Activated T-helper 1 cell treated with anti-CD3 and anti-CD28 coated beads, Interleukin-12 subunit alpha, Interleukin-12 subunit beta, Interleukin-2, Interleukin-4 antibody, amounts not matched to agents 30 ng/mL and 10 ng/mL and 1 ng/mL, durations not matched to agents 14 hours and 24 hours and 36 hours (primary cell): ENCODE measurements at regions of chr1 and their contacts with region 1.

Region 1: GRCh38 chr1:89041119-89041641 is 18.5 kb upstream of the GBP3 start:
- DNase-seq: no peak
- H3K4me3 Mint-ChIP-seq: peak overlapping the region; percentile 19
- H3K27ac Mint-ChIP-seq: peak overlapping the region; percentile 69
- H3K4me1 Mint-ChIP-seq: peaks cover 35% of the 10 kb centered on the region
- H3K27me3 Mint-ChIP-seq: peaks cover 1% of the 10 kb centered on the region

Region 2: DNA sequence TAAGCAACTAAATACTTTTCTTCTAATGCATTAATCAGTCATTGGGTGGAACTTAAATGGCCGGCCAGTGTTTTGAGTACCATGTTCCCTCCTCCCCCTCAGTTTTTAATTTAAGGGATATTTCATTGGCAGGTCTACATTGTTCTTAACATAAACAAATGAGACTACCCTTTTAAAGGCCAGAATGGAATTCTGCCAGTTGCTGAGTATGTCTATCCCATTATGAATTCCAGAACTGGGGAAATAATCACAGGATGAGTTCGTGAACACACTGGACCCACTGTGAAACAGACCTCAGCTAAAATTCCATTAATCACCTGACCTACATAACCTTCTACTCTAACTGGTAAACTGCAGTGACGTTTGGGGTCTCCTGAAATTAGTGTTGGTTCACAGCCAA is 662.6 kb before region 1 on chr1:
- intact Hi-C with region 1: no loop called
- DNase-seq: no peak
- H3K4me3 Mint-ChIP-seq: no peak overlapping the region
- H3K27ac Mint-ChIP-seq: no peak overlapping the region
- H3K4me1 Mint-ChIP-seq: no peaks in the 10 kb centered on the region
- H3K27me3 Mint-ChIP-seq: no peaks in the 10 kb centered on the region

Region 3: DNA sequence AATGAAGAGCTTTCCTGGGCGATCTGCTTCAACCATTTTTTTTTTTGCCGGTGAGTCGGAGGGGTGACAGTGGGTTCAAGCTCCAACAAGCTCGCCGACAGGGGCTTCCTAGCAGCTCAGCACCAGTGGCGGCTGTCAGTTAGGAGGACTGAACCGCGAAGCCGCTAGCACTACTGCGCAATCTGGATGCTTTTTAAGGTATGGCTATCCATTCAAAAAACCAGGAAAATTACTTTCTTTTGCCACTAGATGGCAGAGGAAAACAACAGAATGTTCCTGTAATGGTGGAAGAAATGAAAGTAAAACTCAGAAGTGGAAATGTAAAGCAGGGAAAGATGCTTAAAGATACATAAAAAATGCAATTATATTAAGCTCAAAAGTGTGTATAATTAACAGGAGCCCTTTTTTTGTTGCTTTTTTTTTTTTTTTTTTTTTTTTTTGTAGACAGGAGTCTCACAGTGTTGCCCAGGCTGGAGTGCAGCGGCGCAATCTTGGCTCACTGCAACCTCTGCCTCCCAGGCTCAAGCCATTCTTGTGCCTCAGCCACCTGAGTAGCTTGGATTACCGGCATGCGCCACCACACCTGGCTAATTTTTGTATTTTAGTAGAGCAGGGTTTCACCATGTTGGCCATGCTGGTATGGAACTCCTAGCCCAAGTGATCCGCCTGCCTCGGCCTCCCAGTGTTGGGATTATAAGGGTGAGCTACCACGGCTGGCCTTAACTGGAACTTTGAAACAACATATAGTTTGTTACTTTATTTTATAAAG is 57.2 kb before region 1 on chr1:
- intact Hi-C with region 1: no loop called
- DNase-seq: no peak
- H3K4me3 Mint-ChIP-seq: peak overlapping the region; percentile 31
- H3K27ac Mint-ChIP-seq: peak overlapping the region; percentile 45
- H3K4me1 Mint-ChIP-seq: peaks cover 86% of the 10 kb centered on the region
- H3K27me3 Mint-ChIP-seq: no peaks in the 10 kb centered on the region

Region 4: DNA sequence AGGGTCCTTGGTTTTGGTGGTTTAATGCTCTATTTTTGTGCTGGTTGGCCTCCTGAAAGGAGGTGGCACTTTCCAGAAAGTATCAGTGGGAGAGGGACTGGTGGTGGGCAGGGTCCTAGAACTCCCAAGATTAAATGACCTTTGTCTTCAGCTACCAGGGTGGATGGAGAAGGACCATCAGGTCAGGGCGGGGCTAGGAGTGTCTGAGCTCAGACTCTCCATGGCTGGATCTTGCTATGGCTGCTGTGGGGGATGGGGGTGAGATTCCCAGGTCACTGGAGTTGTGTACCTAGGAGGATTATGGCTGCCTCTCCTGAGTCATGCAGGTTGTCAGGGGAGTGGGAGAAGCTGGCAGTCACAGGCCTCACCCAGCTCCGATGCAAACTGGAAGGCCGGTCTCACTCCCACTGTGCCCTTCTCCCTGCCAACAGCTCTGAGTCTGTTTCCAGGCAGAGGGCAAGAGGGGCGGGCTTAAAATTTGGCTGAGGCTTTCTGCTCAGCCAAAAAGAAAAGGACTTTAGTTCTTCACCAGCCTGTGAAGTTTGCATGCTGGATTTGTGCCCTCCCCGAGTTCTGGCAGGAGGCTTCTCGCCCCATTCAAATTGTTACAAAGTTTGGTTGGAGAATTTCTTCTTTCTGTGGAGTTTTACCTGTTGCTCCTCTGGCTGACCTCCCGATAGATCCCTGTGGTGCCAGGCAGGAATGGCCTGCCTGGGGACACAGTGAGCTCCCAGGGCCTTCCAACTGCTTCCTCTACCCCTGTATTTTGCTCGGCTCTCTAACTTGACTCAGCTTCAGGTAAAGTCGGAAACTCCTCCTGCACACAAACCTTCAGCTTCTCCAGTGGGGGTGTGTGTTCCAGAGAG is 35.7 kb before region 1 on chr1:
- intact Hi-C with region 1: no loop called
- DNase-seq: no peak
- H3K4me3 Mint-ChIP-seq: no peak overlapping the region
- H3K27ac Mint-ChIP-seq: peak overlapping the region; percentile 9
- H3K4me1 Mint-ChIP-seq: peaks cover 39% of the 10 kb centered on the region
- H3K27me3 Mint-ChIP-seq: no peaks in the 10 kb centered on the region

Region 5: DNA sequence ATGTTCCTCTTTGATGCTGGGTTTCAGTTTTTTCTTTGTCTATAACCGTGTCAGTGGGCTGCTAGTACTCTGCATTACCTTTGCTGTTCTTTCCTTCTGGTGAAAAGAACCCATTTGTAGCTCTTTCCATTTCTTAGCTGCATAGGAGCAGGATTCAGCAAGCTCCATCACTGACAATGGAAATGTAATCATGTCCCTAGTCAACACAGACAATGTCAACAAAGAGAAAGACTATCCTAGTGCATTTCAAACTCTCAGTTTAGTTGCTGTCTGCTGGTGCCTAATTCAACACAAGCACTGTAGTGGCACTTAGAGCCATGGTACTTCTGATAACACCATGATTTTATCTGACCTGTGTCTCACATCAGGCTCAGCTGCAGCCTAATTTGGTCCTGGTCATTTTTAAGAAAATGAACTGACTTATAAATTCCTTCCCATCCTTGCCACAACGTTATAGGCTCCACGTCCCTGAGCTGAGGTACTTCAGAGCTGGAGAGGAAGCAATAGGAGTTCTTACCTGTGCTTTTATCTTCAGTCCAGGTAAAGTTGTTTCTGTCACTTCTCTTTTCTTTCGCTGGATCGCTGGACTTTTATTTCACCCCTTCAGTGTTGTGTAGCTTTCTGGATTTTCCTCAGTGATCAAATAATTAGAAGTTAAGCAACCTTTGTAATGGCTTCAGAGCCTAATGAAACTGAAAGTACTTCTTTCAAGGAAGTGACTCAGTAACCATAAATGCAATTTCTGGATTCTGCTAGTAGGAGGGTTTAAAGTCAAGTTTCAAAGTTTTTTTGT is 18.8 kb before region 1 on chr1 and contains the start of gene GBP3:
- intact Hi-C with region 1: loop called (anchors 1 kb)
- DNase-seq: no peak
- H3K4me3 Mint-ChIP-seq: peak within 1 kb of the TSS; percentile 86
- H3K27ac Mint-ChIP-seq: peak within 1 kb of the TSS; percentile 84
- H3K4me1 Mint-ChIP-seq: peaks cover 64% of the 10 kb centered on the region
- H3K27me3 Mint-ChIP-seq: no peaks in the 10 kb centered on the region
- total RNA-seq, gene GBP3: 12.0 and 14.5 TPM in 2 replicates

Region 6: DNA sequence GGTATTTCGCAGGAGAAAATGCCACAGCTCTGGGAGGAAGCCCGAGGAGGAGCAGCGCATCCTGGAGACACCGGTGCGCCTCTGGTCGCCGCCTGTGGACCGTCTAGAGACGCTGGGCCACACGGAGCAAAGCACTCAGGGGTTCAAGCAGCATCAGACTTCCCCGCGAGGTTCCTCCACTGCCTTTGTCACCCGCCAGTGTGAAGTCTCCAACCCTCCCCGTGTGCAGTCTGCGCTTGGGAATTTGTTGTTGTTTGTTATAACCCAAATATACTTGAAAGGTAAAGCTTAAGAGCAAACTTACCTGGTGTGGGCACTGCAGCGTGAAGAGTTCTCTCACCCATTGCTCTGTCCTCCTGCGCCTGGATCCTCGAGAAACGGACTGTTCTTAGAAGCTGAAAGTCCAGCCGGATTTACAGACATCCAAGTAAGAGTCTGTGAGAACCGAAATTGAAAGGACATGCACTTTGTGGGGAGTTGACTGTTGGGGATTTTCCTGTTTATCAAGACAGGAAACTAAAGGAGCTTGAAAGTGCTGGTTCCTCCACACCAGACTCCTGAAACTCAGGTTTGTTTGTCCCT is 157.4 kb after region 1 on chr1 and contains the start of gene GBP4:
- intact Hi-C with region 1: loop called (anchors 5 kb)
- DNase-seq: peak; percentile 43
- H3K4me3 Mint-ChIP-seq: peak within 1 kb of the TSS; percentile 93
- H3K27ac Mint-ChIP-seq: peak within 1 kb of the TSS; percentile 93
- H3K4me1 Mint-ChIP-seq: peaks cover 88% of the 10 kb centered on the region
- H3K27me3 Mint-ChIP-seq: no peaks in the 10 kb centered on the region
- total RNA-seq, gene GBP4: 36.8 and 37.5 TPM in 2 replicates

Region 7: GRCh38 chr1:89286549-89287180 is 245.5 kb after region 1 on chr1:
- intact Hi-C with region 1: loop called (anchors 5 kb)
- DNase-seq: peak; percentile 29
- H3K4me3 Mint-ChIP-seq: peak overlapping the region; percentile 41
- H3K27ac Mint-ChIP-seq: peak overlapping the region; percentile 92
- H3K4me1 Mint-ChIP-seq: peaks cover 83% of the 10 kb centered on the region
- H3K27me3 Mint-ChIP-seq: no peaks in the 10 kb centered on the region

Region 8: GRCh38 chr1:89429062-89429461 is 387.9 kb after region 1 on chr1:
- intact Hi-C with region 1: loop called (anchors 1 kb)
- DNase-seq: no peak
- H3K4me3 Mint-ChIP-seq: no peak overlapping the region
- H3K27ac Mint-ChIP-seq: no peak overlapping the region
- H3K4me1 Mint-ChIP-seq: peaks cover 10% of the 10 kb centered on the region
- H3K27me3 Mint-ChIP-seq: peaks cover 12% of the 10 kb centered on the region

Region 9: GRCh38 chr1:89545264-89546038 is 504.3 kb after region 1 on chr1:
- intact Hi-C with region 1: loop called (anchors 1 kb)
- DNase-seq: peak; percentile 39
- H3K4me3 Mint-ChIP-seq: peak overlapping the region; percentile 12
- H3K27ac Mint-ChIP-seq: peak overlapping the region; percentile 90
- H3K4me1 Mint-ChIP-seq: peaks cover 85% of the 10 kb centered on the region
- H3K27me3 Mint-ChIP-seq: peaks cover 2% of the 10 kb centered on the region